ENCODE measurements at regions of chr7 and their contacts with region 1.

Region 1: GRCh38 chr7:49398746-49399145 is 374.7 kb upstream of the VWC2 start:
- DNase-seq: no peak
- ATAC-seq: no peak
- H3K4me3 Mint-ChIP-seq: no peak overlapping the region
- H3K27ac Mint-ChIP-seq: no peak overlapping the region
- H3K4me1 Mint-ChIP-seq: no peaks in the 10 kb centered on the region
- H3K27me3 Mint-ChIP-seq: no peaks in the 10 kb centered on the region
- CTCF ChIP-seq: no peak

Region 2: DNA sequence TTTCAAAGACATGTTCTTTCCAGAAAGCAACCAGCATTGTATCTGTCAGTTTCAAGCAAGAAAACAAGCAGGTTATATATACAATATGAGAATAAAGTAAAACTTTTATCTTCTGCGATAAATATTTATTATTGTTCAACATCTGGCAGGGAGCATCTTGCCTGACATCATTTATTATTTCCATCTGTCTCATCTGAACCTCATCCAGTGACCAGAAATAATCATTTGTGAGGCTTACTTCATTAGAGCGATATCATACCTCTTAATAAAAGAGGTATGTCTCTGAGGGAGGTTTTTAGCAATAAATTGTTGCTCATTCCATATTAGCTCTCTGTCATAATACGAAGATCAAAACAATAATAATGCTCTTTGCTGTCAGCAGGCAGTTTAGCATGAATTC is 248.3 kb before region 1 on chr7:
- CTCF ChIA-PET with region 1: no interaction called
- POLR2A ChIA-PET with region 1: no interaction called
- intact Hi-C with region 1: no loop called
- DNase-seq: no peak
- ATAC-seq: no peak
- H3K4me3 Mint-ChIP-seq: no peak overlapping the region
- H3K27ac Mint-ChIP-seq: no peak overlapping the region
- H3K4me1 Mint-ChIP-seq: no peaks in the 10 kb centered on the region
- H3K27me3 Mint-ChIP-seq: no peaks in the 10 kb centered on the region
- CTCF ChIP-seq: no peak

Region 3: GRCh38 chr7:49333180-49333881 is 65.4 kb before region 1 on chr7:
- CTCF ChIA-PET with region 1: no interaction called
- POLR2A ChIA-PET with region 1: no interaction called
- intact Hi-C with region 1: loop called (anchors 10 kb)
- DNase-seq: no peak
- ATAC-seq: no peak
- H3K4me3 Mint-ChIP-seq: no peak overlapping the region
- H3K27ac Mint-ChIP-seq: no peak overlapping the region
- H3K4me1 Mint-ChIP-seq: no peaks in the 10 kb centered on the region
- H3K27me3 Mint-ChIP-seq: no peaks in the 10 kb centered on the region
- CTCF ChIP-seq: no peak

Region 4: DNA sequence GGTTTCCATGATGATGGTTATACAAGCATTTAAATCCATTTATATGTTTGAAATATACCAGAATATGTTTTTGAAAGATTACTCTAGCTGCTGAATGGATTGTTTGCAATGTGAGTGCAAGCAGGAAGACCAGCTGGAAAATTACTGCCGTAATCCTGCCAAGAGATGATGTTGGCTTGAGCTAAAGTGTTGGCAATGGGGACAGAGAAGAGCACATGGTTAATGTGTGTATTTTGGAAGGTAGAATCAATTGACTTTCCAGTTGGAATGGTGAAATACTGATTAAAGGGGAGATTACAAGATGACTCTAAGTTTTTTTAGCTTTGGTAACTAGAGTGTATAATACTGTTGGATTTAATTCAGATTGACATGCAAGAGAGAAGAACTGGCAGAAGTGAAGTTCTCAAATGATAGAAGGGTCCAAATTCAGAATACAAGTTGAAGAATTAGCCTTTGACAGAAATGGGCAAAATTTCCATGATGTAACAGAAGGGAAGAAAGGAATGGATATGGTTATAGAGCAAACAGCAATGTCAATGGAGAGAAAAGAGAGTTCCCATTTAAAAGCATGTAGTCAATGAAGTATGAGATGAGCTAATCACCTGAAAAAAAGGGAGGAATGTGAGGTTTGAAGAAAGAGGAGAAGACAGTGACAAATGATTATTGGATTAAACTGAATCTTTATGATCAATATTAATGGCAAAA is 52.4 kb before region 1 on chr7:
- CTCF ChIA-PET with region 1: no interaction called
- POLR2A ChIA-PET with region 1: no interaction called
- intact Hi-C with region 1: no loop called
- DNase-seq: no peak
- ATAC-seq: no peak
- H3K4me3 Mint-ChIP-seq: no peak overlapping the region
- H3K27ac Mint-ChIP-seq: no peak overlapping the region
- H3K4me1 Mint-ChIP-seq: no peaks in the 10 kb centered on the region
- H3K27me3 Mint-ChIP-seq: no peaks in the 10 kb centered on the region
- CTCF ChIP-seq: no peak

Region 5: DNA sequence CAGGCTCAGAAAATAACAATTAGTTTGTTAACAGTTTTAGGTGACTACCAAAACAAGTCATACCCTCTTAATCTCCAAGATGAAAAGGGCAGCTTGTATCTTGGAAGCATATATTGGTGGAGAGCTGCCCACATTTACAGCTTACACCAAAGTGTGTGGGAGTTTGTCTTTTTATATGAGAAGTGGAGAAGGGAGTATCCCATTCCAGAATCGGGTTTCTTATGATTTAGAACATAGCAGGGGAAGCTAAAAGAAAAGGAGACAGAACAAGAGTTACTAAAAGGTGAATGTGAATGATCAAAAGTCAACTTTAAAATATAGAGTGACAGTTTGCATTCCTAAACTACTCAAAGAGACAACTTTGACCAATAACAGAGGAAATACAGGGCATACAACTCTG is 36.1 kb after region 1 on chr7:
- CTCF ChIA-PET with region 1: no interaction called
- POLR2A ChIA-PET with region 1: no interaction called
- intact Hi-C with region 1: loop called (anchors 5 kb)
- DNase-seq: no peak
- ATAC-seq: no peak
- H3K4me3 Mint-ChIP-seq: no peak overlapping the region
- H3K27ac Mint-ChIP-seq: no peak overlapping the region
- H3K4me1 Mint-ChIP-seq: no peaks in the 10 kb centered on the region
- H3K27me3 Mint-ChIP-seq: no peaks in the 10 kb centered on the region
- CTCF ChIP-seq: no peak

Region 6: DNA sequence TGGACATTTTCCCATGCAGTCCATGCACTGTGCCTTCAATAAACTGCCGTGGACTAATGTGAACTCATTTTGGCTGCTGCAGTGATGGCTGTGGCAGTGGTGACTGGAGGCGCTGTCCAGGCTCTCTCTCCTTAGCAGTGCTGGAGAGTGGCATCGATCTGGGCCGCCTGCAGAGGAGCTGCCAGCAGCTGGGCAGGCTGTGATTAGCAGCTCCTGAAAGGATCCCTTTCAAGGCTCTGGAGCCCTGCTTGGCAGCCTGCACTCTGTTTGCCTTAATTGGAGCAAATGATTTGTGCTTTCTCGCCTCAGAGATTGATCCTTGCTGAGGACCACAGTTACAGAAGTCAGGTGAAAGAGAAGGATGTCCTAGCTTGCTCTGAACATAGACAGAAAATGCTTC is 244.6 kb after region 1 on chr7:
- CTCF ChIA-PET with region 1: no interaction called
- POLR2A ChIA-PET with region 1: no interaction called
- intact Hi-C with region 1: no loop called
- DNase-seq: no peak
- ATAC-seq: no peak
- H3K4me3 Mint-ChIP-seq: no peak overlapping the region
- H3K27ac Mint-ChIP-seq: no peak overlapping the region
- H3K4me1 Mint-ChIP-seq: no peaks in the 10 kb centered on the region
- H3K27me3 Mint-ChIP-seq: no peaks in the 10 kb centered on the region
- CTCF ChIP-seq: no peak